Heart left ventricle (tissue), 16 donors: ENCODE measurements at regions of chrX and their contacts with region 1.

Region 1: DNA sequence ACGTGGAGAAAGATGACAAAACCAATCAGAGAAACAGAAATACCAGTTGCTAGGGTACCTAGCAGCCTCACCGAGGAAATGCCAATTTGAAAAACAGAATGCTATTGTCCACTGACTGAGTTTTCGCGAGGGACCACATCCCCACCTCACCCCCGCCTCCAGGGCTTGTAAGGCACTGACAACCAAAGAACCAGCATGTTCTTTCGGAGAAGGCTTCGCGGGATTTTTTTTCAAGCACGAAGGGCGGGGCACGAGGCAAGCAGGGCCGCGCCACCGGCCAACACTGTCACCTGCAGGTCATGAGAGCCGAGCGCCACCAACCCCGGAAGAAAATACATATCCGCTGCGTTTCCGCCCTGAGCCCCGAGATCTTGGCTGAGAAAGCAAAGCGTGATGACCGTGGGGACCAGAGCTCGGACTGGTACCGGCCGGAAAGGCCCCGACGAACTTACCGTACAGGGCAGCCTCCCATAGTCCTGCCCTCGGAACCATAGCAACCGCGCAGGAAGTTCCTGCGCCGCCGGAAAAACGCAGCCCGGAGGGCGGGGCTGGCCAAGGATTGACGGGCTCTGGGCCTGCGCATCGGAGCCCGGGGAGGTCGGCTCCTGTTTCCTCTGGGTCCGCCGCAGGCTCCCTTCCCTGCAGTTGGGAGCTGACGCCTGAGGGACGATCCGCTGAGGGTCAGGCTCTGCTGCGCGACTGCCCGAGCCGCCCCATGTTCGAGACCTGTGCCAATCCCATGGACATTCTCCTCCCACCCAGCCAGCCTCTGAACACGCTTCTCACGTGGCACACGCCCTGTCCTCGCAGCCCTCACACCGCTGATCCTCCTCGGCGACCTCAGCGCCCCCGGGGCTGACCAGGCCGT is 59.2 kb upstream of the PAGE5 start:
- DNase-seq: peak; percentile 90 to 94 (median 92)
- ATAC-seq: peak; percentile 99 to 100 (median 100)
- H3K4me3 ChIP-seq: peak overlapping the region; percentile 36 to 83 (median 59)
- H3K27ac ChIP-seq: peak overlapping the region; percentile 86 to 95 (median 92)
- H3K4me1 ChIP-seq: peaks cover 0 to 12% (median 0%) of the 10 kb centered on the region in 12 donors
- H3K27me3 ChIP-seq: peaks cover 0 to 8% (median 0%) of the 10 kb centered on the region in 9 donors
- CTCF ChIP-seq: peak in 11 of 12 donors; percentile 6 to 59 (median 40)
- POLR2A ChIP-seq: peak in 1 of 2 donors; percentile 83

Region 2: DNA sequence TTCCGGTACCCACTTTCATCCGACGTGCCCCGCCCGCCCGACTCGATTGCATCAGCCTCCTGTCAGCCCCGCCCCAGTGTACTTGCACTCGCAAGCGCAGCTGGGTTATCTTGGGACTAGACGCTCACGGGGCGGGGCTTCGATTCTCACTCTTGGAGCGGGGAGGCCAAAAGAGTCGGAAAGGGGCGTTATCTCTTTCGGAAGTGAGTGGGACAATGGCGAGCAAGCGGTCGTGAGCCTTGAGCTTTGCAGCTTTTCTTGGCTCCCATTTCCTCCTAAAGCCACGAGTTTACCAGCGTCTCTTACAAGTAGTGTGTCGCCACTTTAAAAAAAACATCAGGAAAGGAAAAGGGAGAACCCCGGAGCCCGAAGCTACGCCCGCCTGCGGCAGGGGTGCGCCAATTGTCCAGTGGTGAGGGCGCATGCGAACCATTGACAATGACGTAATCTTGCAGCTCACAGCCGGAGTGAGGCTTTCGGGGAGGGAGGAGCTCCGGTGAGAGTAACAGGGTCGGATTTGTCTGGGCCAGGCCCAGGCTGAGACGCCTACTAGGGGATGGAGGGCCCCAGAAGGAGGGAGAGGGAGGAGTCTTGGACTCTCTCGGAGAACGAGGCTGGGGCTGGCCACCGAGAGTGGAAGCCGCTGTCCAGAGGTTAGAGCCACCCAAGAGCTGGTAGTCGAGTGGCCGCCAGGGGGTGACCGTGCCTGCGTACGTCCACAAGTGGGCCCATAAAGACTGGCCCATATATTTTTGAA is 521.4 kb before region 1 on chrX:
- intact Hi-C with region 1: loop called in 1 of 10 experiments (anchors 10 kb)
- DNase-seq: peak; percentile 93 to 97 (median 95)
- ATAC-seq: peak; percentile 97 to 99 (median 98)
- H3K4me3 ChIP-seq: peak overlapping the region in 11 of 12 donors; percentile 16 to 64 (median 51)
- H3K27ac ChIP-seq: peak overlapping the region; percentile 81 to 96 (median 91)
- H3K4me1 ChIP-seq: peaks cover 0 to 8% (median 0%) of the 10 kb centered on the region in 12 donors
- H3K27me3 ChIP-seq: no peaks in the 10 kb centered on the region
- CTCF ChIP-seq: peak; percentile 49 to 80 (median 62)
- POLR2A ChIP-seq: peak in 1 of 2 donors; percentile 51

Region 3: GRCh38 chrX:55326985-55327384 is 166.1 kb after region 1 on chrX:
- intact Hi-C with region 1: loop called in 1 of 10 experiments (anchors 10 kb)
- DNase-seq: peak in 3 of 5 donors; percentile 18 to 26 (median 23)
- ATAC-seq: peak; percentile 71 to 97 (median 83)
- H3K4me3 ChIP-seq: no peak overlapping the region
- H3K27ac ChIP-seq: peak overlapping the region in 10 of 12 donors; percentile 11 to 85 (median 70)
- H3K4me1 ChIP-seq: peaks cover 0 to 6% (median 0%) of the 10 kb centered on the region in 12 donors
- H3K27me3 ChIP-seq: peaks cover 0 to 11% (median 0%) of the 10 kb centered on the region in 9 donors
- CTCF ChIP-seq: no peak
- POLR2A ChIP-seq: no peak

Region 4: DNA sequence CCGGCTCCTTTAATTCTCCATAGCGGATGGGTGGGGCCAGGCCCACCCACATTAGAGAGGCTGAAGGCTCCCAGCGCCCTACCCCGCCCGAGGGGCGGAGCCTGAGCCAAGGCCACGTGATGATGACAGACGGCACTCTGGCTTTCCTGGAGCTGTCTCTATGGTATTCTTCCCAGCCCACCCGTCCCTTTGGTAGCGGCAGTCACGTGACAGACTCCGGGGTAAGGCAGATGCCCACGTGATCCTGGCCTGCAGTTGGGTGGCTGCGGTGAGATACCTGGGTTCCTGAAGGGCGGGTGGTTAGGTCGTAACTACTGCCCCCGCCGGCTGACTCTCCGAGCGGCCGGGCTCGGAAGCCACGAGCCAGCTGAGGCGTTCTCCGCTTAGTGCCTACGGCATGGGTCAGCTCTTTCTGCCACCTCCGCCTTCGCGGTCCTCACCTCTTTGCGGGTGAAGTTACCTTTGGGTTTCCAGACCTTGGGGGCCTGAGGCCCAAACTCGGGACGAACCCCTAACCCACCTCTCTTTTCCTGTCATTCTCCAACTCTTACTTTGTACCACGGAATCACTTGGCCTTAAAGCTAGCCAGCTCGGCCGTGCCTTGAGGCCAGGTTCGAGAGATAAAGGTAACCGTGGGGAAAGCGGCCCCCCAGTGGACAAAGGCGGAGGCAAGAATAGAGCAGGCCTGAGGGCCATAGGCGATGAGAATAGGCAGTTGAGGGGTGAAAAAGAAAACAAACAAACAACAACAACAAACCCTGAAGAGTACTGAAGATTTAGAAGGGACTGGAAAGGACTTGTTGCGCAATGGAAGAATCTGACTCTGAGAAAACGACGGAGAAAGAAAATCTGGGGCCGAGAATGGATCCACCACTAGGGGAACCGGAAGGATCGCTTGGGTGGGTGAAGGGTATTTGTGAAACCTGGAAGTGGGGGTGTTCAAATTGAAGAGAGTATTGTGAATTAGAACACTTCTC is 556.9 kb after region 1 on chrX and contains the start of gene RRAGB:
- intact Hi-C with region 1: loop called in 1 of 10 experiments (anchors 5 kb)
- DNase-seq: peak; percentile 93 to 96 (median 94)
- ATAC-seq: peak; percentile 100
- H3K4me3 ChIP-seq: peak within 1 kb of the TSS; percentile 51 to 99 (median 70)
- H3K27ac ChIP-seq: peak within 1 kb of the TSS; percentile 62 to 89 (median 86)
- H3K4me1 ChIP-seq: peaks cover 0 to 21% (median 2%) of the 10 kb centered on the region in 12 donors
- H3K27me3 ChIP-seq: no peaks in the 10 kb centered on the region
- CTCF ChIP-seq: peak in 11 of 12 donors; percentile 23 to 58 (median 45)
- POLR2A ChIP-seq: no peak
- total RNA-seq, gene RRAGB: 8.1 to 16.1 (median 11.5) TPM